CD4-positive, alpha-beta T cell (primary cell): ENCODE measurements at regions of chr7 and their contacts with region 1.

Region 1: GRCh38 chr7:45259966-45260646 is 102.5 kb downstream of the RAMP3 start:
- DNase-seq: peak; percentile 35 to 77 (median 61)
- ATAC-seq: peak; percentile 54
- H3K4me3 ChIP-seq: no peak overlapping the region
- H3K4me3 Mint-ChIP-seq: no peak overlapping the region
- H3K27ac ChIP-seq: no peak overlapping the region
- H3K27ac Mint-ChIP-seq: no peak overlapping the region
- H3K4me1 ChIP-seq: peaks cover 8% of the 10 kb centered on the region
- H3K4me1 Mint-ChIP-seq: no peaks in the 10 kb centered on the region
- H3K27me3 ChIP-seq: peaks cover 3 to 6% of the 10 kb centered on the region in 2 experiments
- H3K27me3 Mint-ChIP-seq: peaks cover 35% of the 10 kb centered on the region
- CTCF ChIP-seq: peak; percentile 98

Region 2: DNA sequence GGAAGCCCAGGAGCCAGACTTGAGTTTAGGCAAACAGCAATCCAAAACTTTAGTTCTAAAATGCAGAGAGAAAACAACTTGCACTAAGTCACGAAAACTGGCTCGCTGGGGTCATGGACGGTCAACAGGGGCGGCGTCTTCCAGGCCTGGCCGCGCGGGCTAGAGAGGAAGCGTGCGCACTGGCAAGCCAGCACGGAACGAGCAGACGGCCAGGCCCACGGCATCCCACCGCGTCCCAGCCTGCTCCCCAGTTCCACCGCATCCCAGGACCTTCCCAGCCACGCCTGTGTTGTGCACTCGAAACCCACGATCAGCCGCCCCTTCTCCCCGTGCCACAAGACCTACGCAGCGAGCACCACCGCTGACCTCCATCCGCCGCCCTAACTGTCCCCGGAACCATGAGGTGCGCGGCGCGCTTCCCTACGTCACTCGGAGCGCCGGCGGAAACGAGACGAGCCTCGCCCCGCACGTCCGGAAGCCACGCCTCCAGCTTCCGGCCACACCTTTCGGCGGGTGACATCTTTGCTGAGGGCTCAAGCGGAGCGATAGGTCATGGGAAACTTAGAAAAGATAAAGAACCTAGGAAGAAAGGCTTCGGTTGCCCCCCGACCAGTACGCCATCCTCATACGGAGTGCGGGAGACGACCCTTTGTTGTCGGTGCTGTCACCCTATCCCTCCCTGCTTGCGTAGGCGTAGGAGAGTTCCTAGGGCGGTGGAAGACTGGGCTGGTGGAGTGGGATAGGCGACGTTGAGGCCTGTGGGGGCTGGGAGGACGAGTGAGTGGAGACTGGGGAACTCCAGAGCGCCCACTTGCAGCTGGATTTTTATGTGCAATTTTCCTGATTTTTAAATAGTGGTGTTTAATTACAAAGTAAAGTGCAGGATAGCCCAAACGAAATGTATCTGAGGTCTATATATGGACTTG is 148.5 kb before region 1 on chr7 and contains the start of gene TBRG4:
- CTCF ChIA-PET with region 1: no interaction called
- POLR2A ChIA-PET with region 1: no interaction called
- intact Hi-C with region 1: no loop called
- DNase-seq: peak; percentile 86 to 98 (median 91)
- ATAC-seq: peak; percentile 78
- H3K4me3 ChIP-seq: peak within 1 kb of the TSS; percentile 94
- H3K4me3 Mint-ChIP-seq: peak within 1 kb of the TSS; percentile 98
- H3K27ac ChIP-seq: peak within 1 kb of the TSS; percentile 99
- H3K27ac Mint-ChIP-seq: peak within 1 kb of the TSS; percentile 96
- H3K4me1 ChIP-seq: peaks cover 51% of the 10 kb centered on the region
- H3K4me1 Mint-ChIP-seq: peaks cover 55% of the 10 kb centered on the region
- H3K27me3 ChIP-seq: no peaks in the 10 kb centered on the region
- H3K27me3 Mint-ChIP-seq: peaks cover 9% of the 10 kb centered on the region
- CTCF ChIP-seq: no peak
- total RNA-seq, gene TBRG4: 104 to 105 TPM

Region 3: DNA sequence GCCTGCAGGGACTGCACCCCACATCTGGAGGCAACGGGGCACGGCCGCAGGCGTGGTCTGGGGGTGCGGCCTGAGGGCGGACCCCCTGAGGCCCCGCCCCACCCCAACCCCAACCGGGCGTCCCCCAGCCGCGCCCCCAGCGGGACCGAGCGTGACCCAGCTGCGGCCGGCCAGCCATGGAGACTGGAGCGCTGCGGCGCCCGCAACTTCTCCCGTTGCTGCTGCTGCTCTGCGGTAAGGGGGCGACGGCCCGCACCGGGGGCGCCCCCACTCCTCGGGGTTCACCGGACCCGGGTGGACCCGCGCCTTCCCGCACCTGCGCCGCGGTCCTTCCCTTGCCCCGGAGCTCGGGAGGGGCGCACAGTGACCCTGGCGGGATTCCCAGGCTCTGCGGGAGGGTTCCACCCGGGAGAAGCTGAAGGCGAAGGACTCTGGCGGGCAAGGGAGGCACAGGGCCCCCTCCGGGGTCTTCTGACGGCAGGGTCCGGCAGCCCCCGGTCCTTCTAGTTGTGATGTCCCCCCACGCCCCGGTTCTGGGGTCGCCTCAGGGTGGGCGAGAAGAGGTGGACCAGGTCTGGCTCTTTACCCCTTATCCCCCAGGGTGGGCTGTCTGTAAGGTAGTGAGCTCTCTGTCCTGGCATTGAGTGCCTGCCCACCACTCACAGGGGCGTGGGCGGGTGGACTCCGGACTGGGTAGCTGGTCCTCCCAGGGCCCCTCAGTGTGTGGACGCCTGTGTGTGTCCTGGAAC is 102.3 kb before region 1 on chr7 and contains the start of gene RAMP3:
- CTCF ChIA-PET with region 1: no interaction called
- POLR2A ChIA-PET with region 1: no interaction called
- intact Hi-C with region 1: loop called (anchors 1 kb)
- DNase-seq: no peak
- ATAC-seq: no peak
- H3K4me3 ChIP-seq: no peak within 1 kb of the TSS
- H3K4me3 Mint-ChIP-seq: no peak within 1 kb of the TSS
- H3K27ac ChIP-seq: no peak within 1 kb of the TSS
- H3K27ac Mint-ChIP-seq: no peak within 1 kb of the TSS
- H3K4me1 ChIP-seq: peaks cover 7% of the 10 kb centered on the region
- H3K4me1 Mint-ChIP-seq: peaks cover 15% of the 10 kb centered on the region
- H3K27me3 ChIP-seq: peaks cover 13 to 29% of the 10 kb centered on the region in 2 experiments
- H3K27me3 Mint-ChIP-seq: peaks cover 42% of the 10 kb centered on the region
- CTCF ChIP-seq: no peak
- total RNA-seq, gene RAMP3: not detected

Region 4: DNA sequence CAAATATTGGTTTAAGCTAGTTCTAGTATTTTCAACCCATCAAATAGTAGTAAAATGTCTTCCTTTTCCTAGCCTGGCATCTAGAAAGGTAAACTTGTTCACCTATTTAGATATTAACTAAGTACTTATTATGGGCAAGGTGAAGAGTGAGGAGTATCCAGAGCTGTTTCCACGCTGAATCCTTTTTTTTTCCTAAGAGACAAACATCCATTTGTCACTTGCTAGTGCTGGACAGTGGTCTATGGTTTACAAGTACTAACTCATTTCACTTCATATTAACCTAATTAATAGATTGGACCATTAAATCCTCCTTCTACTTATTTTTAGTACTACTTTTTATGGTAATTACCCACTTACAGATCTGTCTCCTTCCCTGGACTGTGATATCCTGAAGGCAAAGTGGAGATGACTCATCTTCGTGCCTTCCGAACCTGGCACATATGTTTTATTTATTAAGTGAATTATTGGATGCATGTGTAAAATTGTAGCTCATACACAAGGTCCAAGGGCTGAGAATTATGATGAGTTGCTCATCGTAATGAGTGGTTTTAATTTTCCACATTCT is 820.6 kb after region 1 on chr7:
- CTCF ChIA-PET with region 1: no interaction called
- POLR2A ChIA-PET with region 1: no interaction called
- intact Hi-C with region 1: no loop called
- DNase-seq: no peak
- ATAC-seq: no peak
- H3K4me3 ChIP-seq: no peak overlapping the region
- H3K4me3 Mint-ChIP-seq: no peak overlapping the region
- H3K27ac ChIP-seq: no peak overlapping the region
- H3K27ac Mint-ChIP-seq: no peak overlapping the region
- H3K4me1 ChIP-seq: no peaks in the 10 kb centered on the region
- H3K4me1 Mint-ChIP-seq: no peaks in the 10 kb centered on the region
- H3K27me3 ChIP-seq: no peaks in the 10 kb centered on the region
- H3K27me3 Mint-ChIP-seq: no peaks in the 10 kb centered on the region
- CTCF ChIP-seq: no peak